Sigmoid colon (tissue), 7 donors: ENCODE measurements at regions of chr11 and their contacts with region 1.

Region 1: DNA sequence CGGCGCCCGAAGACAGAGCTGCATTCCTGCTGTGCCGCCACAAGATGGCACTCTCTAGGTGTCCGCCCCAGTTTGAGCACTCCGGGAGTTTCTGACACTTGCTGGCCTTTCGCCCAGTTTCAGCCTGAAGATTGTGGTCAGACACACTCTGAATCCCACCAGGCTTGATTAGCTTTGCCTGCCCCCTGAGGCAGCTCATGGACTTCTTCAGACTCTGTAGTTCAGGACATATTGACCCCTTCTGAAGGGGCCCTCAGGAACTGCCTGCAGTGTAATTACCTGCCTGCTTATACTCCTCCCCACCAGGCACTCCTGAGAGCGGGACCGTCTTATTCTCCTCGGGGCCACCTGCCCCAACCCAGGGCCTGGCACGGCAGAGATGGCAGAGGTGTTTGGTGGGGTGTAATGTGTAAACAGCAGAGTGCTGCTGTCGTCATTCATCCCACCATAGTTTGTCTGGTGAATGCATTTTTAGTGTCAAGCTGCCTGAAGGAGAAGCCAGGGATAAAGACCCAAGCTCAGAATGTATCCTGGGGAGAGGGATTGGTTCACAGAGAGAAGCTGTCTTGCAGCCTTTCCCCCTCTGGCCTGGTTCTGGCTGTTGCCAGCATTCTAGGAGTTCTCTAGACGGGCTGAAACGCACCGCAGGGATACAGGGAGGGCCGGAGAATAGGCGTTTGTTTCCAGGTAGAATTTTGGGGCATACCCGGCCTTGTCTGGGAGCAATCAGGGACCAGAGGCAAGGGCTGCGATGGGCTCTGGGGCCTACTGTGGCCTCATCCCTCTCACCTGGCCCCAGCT is 46.4 kb downstream of the EIF3F start:
- DNase-seq: peak; percentile 92
- H3K4me3 ChIP-seq: no peak overlapping the region
- H3K27ac ChIP-seq: no peak overlapping the region
- H3K4me1 ChIP-seq: peaks cover 0 to 11% (median 10%) of the 10 kb centered on the region in 4 donors
- H3K27me3 ChIP-seq: no peaks in the 10 kb centered on the region
- CTCF ChIP-seq: peak; percentile 71 to 95 (median 92)
- EP300 ChIP-seq: no peak
- POLR2A ChIP-seq: no peak

Region 2: GRCh38 chr11:7977232-7977917 is 56.1 kb before region 1 on chr11:
- intact Hi-C with region 1: no loop called
- DNase-seq: no peak
- H3K4me3 ChIP-seq: no peak overlapping the region
- H3K27ac ChIP-seq: no peak overlapping the region
- H3K4me1 ChIP-seq: no peaks in the 10 kb centered on the region
- H3K27me3 ChIP-seq: no peaks in the 10 kb centered on the region
- CTCF ChIP-seq: no peak
- EP300 ChIP-seq: no peak
- POLR2A ChIP-seq: no peak

Region 3: GRCh38 chr11:8056810-8057463 is 23.4 kb after region 1 on chr11:
- intact Hi-C with region 1: no loop called
- DNase-seq: peak; percentile 95
- H3K4me3 ChIP-seq: no peak overlapping the region
- H3K27ac ChIP-seq: peak overlapping the region; percentile 52 to 78 (median 66)
- H3K4me1 ChIP-seq: peaks cover 0 to 34% (median 23%) of the 10 kb centered on the region in 4 donors
- H3K27me3 ChIP-seq: no peaks in the 10 kb centered on the region
- CTCF ChIP-seq: no peak
- EP300 ChIP-seq: peak in 3 of 4 donors; percentile 56 to 74 (median 66)
- POLR2A ChIP-seq: no peak

Region 4: GRCh38 chr11:8070417-8071115 is 37.1 kb after region 1 on chr11:
- intact Hi-C with region 1: loop called (anchors 1 kb)
- DNase-seq: no peak
- H3K4me3 ChIP-seq: no peak overlapping the region
- H3K27ac ChIP-seq: no peak overlapping the region
- H3K4me1 ChIP-seq: peaks cover 0 to 38% (median 26%) of the 10 kb centered on the region in 4 donors
- H3K27me3 ChIP-seq: no peaks in the 10 kb centered on the region
- CTCF ChIP-seq: peak in 1 of 4 experiments; percentile 12
- EP300 ChIP-seq: no peak
- POLR2A ChIP-seq: no peak

Region 5: GRCh38 chr11:8090756-8091155 is 57.3 kb after region 1 on chr11:
- intact Hi-C with region 1: loop called (anchors 2 kb)
- DNase-seq: peak; percentile 62
- H3K4me3 ChIP-seq: no peak overlapping the region
- H3K27ac ChIP-seq: no peak overlapping the region
- H3K4me1 ChIP-seq: peaks cover 0 to 15% (median 7%) of the 10 kb centered on the region in 4 donors
- H3K27me3 ChIP-seq: no peaks in the 10 kb centered on the region
- CTCF ChIP-seq: peak in 3 of 4 experiments; percentile 5 to 60 (median 45)
- EP300 ChIP-seq: no peak
- POLR2A ChIP-seq: no peak

Region 6: GRCh38 chr11:8099291-8099899 is 65.9 kb after region 1 on chr11:
- intact Hi-C with region 1: loop called (anchors 2 kb)
- DNase-seq: peak; percentile 85
- H3K4me3 ChIP-seq: no peak overlapping the region
- H3K27ac ChIP-seq: no peak overlapping the region
- H3K4me1 ChIP-seq: no peaks in the 10 kb centered on the region
- H3K27me3 ChIP-seq: no peaks in the 10 kb centered on the region
- CTCF ChIP-seq: peak; percentile 30 to 79 (median 68)
- EP300 ChIP-seq: no peak
- POLR2A ChIP-seq: no peak

Region 7: GRCh38 chr11:8328848-8329330 is 295.4 kb after region 1 on chr11:
- intact Hi-C with region 1: no loop called
- DNase-seq: peak; percentile 78
- H3K4me3 ChIP-seq: no peak overlapping the region
- H3K27ac ChIP-seq: no peak overlapping the region
- H3K4me1 ChIP-seq: peaks cover 0 to 9% (median 4%) of the 10 kb centered on the region in 4 donors
- H3K27me3 ChIP-seq: peaks cover 0 to 7% (median 0%) of the 10 kb centered on the region in 3 donors
- CTCF ChIP-seq: peak; percentile 23 to 77 (median 37)
- EP300 ChIP-seq: no peak
- POLR2A ChIP-seq: no peak